Activated CD4-positive, alpha-beta T cell treated with anti-CD3 and anti-CD28 coated beads for 36 hours (primary cell): ENCODE measurements at regions of chr9 and their contacts with region 1.

Region 1: GRCh38 chr9:132525308-132525707 is 57.1 kb upstream of the BARHL1 start:
- DNase-seq: no peak
- ATAC-seq: no peak
- H3K4me3 Mint-ChIP-seq: no peak overlapping the region
- H3K27ac Mint-ChIP-seq: no peak overlapping the region
- H3K4me1 Mint-ChIP-seq: no peaks in the 10 kb centered on the region
- H3K27me3 Mint-ChIP-seq: peaks cover 5% of the 10 kb centered on the region

Region 2: GRCh38 chr9:132169672-132170392 is 355.5 kb before region 1 on chr9:
- CTCF ChIA-PET with region 1: no interaction called
- POLR2A ChIA-PET with region 1: no interaction called
- intact Hi-C with region 1: loop called in 1 of 2 experiments (anchors 5 kb)
- DNase-seq: peak; percentile 79
- ATAC-seq: peak; percentile 58
- H3K4me3 Mint-ChIP-seq: no peak overlapping the region
- H3K27ac Mint-ChIP-seq: no peak overlapping the region
- H3K4me1 Mint-ChIP-seq: no peaks in the 10 kb centered on the region
- H3K27me3 Mint-ChIP-seq: peaks cover 33% of the 10 kb centered on the region

Region 3: GRCh38 chr9:132354637-132355355 is 170.5 kb before region 1 on chr9 and contains the start of gene SETX:
- CTCF ChIA-PET with region 1: no interaction called
- POLR2A ChIA-PET with region 1: no interaction called
- intact Hi-C with region 1: no loop called
- DNase-seq: peak; percentile 98
- ATAC-seq: peak; percentile 81
- H3K4me3 Mint-ChIP-seq: peak within 1 kb of the TSS; percentile 79
- H3K27ac Mint-ChIP-seq: peak within 1 kb of the TSS; percentile 98
- H3K4me1 Mint-ChIP-seq: peaks cover 36% of the 10 kb centered on the region
- H3K27me3 Mint-ChIP-seq: no peaks in the 10 kb centered on the region
- total RNA-seq, gene SETX: 37.5 to 38.1 TPM